Activated CD4-positive, alpha-beta T cell treated with anti-CD3 and anti-CD28 coated beads for 36 hours (primary cell): ENCODE measurements at regions of chr10 and their contacts with region 1.

Region 1: GRCh38 chr10:130127364-130128061 is 8.7 kb upstream of the GLRX3 start:
- DNase-seq: peak; percentile 75
- ATAC-seq: peak; percentile 97
- H3K4me3 Mint-ChIP-seq: no peak overlapping the region
- H3K27ac Mint-ChIP-seq: no peak overlapping the region
- H3K4me1 Mint-ChIP-seq: peaks cover 7% of the 10 kb centered on the region
- H3K27me3 Mint-ChIP-seq: peaks cover 18% of the 10 kb centered on the region

Region 2: DNA sequence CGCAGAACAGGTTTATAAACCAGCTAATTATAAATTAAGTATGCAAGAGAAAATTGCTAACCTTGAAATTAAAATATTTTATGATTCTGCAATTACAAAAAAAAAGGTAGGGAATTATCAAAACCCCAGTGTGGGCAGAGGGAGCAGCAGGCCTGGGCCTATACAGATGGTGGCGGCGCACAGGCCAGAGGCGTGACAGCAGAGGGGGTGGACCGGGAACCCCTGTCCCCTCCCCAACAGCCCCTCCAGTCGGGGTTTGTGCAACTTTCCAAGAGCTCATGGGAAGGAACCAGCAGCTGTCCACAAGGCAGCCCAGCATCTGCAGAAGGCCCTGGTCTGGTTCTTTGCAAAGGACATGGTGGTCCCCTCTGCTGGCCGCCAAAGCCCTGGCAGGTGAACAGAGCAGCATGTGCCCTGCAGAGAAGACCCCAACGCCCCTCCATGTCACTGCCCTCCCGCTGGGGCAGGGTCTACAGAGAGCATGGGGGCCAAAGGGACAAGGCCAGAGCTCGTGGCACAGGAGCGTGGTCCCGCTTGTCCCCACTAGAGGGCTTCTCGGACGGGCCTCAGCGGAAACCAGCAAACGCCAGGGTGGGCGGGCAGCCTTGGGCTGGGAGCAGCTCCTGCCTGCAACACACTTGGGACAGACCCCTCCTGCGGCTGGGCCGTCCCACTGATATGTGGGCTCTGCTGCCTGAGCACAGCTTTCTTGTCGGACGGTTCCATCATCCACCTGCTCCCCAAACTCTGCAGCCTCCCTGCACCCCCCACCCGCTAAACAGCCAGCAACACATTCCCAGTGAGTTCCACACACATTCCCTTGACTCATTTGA is 238.5 kb before region 1 on chr10:
- CTCF ChIA-PET with region 1: interaction called, 3 read pairs
- POLR2A ChIA-PET with region 1: no interaction called
- intact Hi-C with region 1: loop called (anchors 1 to 5 kb)
- DNase-seq: peak; percentile 70
- ATAC-seq: peak; percentile 61
- H3K4me3 Mint-ChIP-seq: no peak overlapping the region
- H3K27ac Mint-ChIP-seq: no peak overlapping the region
- H3K4me1 Mint-ChIP-seq: no peaks in the 10 kb centered on the region
- H3K27me3 Mint-ChIP-seq: no peaks in the 10 kb centered on the region

Region 3: DNA sequence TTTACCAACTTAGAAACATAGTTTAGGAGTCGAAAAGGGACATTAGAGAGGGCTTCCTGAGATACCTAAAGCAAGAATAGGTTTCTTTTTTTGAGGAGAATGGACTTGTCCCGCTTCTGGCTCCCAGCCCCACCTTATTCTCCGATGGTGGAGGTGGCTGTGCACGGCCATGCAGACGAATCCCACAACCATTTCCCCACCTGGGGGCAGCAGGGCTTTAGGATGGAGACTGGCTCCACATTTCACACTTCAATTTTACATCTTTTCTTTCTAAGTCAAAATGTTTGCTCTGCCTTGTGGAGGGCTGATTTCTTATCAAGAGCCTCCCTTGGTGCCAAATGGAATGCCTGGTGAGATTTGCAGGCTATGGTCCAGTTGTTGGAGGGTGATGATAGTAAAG is 127.1 kb after region 1 on chr10:
- CTCF ChIA-PET with region 1: no interaction called
- POLR2A ChIA-PET with region 1: no interaction called
- intact Hi-C with region 1: no loop called
- DNase-seq: no peak
- ATAC-seq: no peak
- H3K4me3 Mint-ChIP-seq: no peak overlapping the region
- H3K27ac Mint-ChIP-seq: no peak overlapping the region
- H3K4me1 Mint-ChIP-seq: no peaks in the 10 kb centered on the region
- H3K27me3 Mint-ChIP-seq: no peaks in the 10 kb centered on the region